Psoas muscle (tissue), 8 donors: ENCODE measurements at regions of chr18 and their contacts with region 1.

Region 1: DNA sequence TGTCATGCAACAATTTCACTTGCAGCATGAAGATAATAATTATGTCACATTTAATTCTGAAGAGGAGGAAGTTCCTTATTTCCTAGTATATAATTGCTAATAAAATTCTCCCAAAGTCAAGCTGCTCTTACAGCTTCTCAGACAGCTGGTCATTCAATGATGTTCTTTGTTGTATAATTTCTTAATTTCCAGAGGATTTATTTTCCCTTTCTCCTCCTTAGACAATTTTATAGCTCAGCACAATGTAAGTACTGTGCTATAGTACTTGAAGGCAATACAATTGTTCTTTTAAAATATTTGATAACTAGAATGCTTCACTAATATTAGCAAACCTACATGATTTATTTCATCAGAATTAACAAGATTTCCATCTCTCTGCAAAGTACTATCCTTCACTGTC is 73.4 kb downstream of the ROCK1 start:
- DNase-seq: no peak
- ATAC-seq: no peak
- H3K4me3 ChIP-seq: no peak overlapping the region
- H3K27ac ChIP-seq: no peak overlapping the region
- H3K4me1 ChIP-seq: no peaks in the 10 kb centered on the region
- H3K27me3 ChIP-seq: no peaks in the 10 kb centered on the region
- CTCF ChIP-seq: no peak

Region 2: DNA sequence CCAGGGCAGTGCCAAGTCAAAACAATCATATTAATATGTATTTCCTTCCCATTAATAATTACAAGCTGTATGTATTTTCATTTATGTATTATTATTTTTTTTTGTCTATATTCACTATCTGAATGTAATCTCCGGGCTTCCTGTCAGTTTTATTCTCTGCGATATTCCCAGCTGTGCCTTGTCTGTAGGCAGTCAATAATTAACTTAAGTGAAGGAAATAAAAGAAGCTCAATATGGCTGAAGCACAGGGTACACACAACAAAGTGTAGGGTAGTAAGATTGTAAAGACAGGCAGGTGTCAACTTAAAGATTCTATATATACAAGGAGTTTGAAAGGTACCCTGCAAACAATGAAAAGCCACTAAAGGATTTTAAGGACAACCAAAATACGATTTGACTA is 49.5 kb before region 1 on chr18:
- intact Hi-C with region 1: loop called in 1 of 2 experiments (anchors 10 kb)
- DNase-seq: no peak
- ATAC-seq: no peak
- H3K4me3 ChIP-seq: no peak overlapping the region
- H3K27ac ChIP-seq: no peak overlapping the region
- H3K4me1 ChIP-seq: no peaks in the 10 kb centered on the region
- H3K27me3 ChIP-seq: no peaks in the 10 kb centered on the region
- CTCF ChIP-seq: no peak

Region 3: DNA sequence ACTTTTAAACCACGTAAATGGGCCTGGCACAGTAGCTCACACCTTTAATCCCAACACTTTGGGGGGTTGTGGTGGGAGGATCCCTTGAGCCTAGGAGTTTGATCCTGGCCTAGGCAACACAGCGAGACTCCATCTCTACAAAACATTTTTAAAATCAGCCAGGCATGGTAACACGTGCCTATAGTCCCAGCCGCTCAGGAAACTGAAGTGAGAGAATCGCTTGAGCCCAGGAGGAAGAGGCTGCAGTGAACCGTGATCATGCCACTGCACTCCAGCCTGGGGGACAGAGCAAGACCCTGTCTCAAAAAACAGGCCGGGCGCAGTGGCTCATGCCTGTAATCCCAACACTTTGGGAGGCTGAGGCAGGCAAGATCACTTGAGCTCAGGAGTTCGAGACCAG is 61.2 kb after region 1 on chr18:
- intact Hi-C with region 1: no loop called
- DNase-seq: no peak
- ATAC-seq: no peak
- H3K4me3 ChIP-seq: no peak overlapping the region
- H3K27ac ChIP-seq: no peak overlapping the region
- H3K4me1 ChIP-seq: peaks cover 48% of the 10 kb centered on the region
- H3K27me3 ChIP-seq: no peaks in the 10 kb centered on the region
- CTCF ChIP-seq: no peak